ENCODE measurements at regions of chr12 and their contacts with region 1.

Region 1: DNA sequence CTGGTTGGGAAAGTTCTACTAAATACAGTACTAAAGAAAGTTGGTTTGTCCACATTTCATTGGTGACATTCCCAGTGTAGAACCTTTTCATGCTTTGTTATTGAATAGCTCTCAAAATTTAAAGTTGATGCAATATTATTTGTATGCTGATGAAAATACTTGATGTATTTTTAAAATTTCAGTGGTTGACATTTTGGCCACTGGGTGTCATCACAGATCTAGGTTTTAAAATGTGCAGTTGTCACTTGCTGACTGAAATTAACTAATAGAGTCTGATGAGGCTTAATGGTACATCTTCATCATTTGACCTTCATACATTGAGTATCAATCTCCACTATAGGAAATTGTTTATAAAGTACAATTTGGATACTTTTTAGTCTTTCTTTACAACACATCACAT is 37.1 kb downstream of the CMAS start:
- DNase-seq: peak; percentile 56
- H3K4me3 ChIP-seq: no peak overlapping the region
- H3K27ac ChIP-seq: no peak overlapping the region
- H3K4me1 ChIP-seq: no peaks in the 10 kb centered on the region
- H3K27me3 ChIP-seq: peaks cover 0 to 2% of the 10 kb centered on the region in 2 experiments
- CTCF ChIP-seq: peak in 1 of 2 donors; percentile 12
- POLR2A ChIP-seq: no peak

Region 2: GRCh38 chr12:22069856-22070565 is 13.2 kb before region 1 on chr12:
- CTCF ChIA-PET with region 1: interaction called, 12 read pairs
- POLR2A ChIA-PET with region 1: no interaction called
- dilution Hi-C with region 1: no loop called
- intact Hi-C with region 1: no loop called
- DNase-seq: no peak
- H3K4me3 ChIP-seq: no peak overlapping the region
- H3K27ac ChIP-seq: no peak overlapping the region
- H3K4me1 ChIP-seq: no peaks in the 10 kb centered on the region
- H3K27me3 ChIP-seq: peaks cover 0 to 2% of the 10 kb centered on the region in 2 experiments
- CTCF ChIP-seq: no peak
- POLR2A ChIP-seq: no peak

Region 3: GRCh38 chr12:22437031-22437780 is 354.0 kb after region 1 on chr12:
- CTCF ChIA-PET with region 1: interaction called, 13 read pairs
- POLR2A ChIA-PET with region 1: no interaction called
- dilution Hi-C with region 1: no loop called
- intact Hi-C with region 1: loop called (anchors 1 kb)
- DNase-seq: no peak
- H3K4me3 ChIP-seq: no peak overlapping the region
- H3K27ac ChIP-seq: no peak overlapping the region
- H3K4me1 ChIP-seq: no peaks in the 10 kb centered on the region
- H3K27me3 ChIP-seq: peaks cover 0 to 5% of the 10 kb centered on the region in 2 experiments
- CTCF ChIP-seq: no peak
- POLR2A ChIP-seq: no peak

Region 4: GRCh38 chr12:22443379-22444316 is 360.5 kb after region 1 on chr12:
- CTCF ChIA-PET with region 1: interaction called, 63 read pairs
- POLR2A ChIA-PET with region 1: no interaction called
- dilution Hi-C with region 1: no loop called
- intact Hi-C with region 1: loop called (anchors 1 kb)
- DNase-seq: peak; percentile 67
- H3K4me3 ChIP-seq: no peak overlapping the region
- H3K27ac ChIP-seq: no peak overlapping the region
- H3K4me1 ChIP-seq: no peaks in the 10 kb centered on the region
- H3K27me3 ChIP-seq: peaks cover 0 to 4% of the 10 kb centered on the region in 2 experiments
- CTCF ChIP-seq: peak; percentile 58 to 67
- POLR2A ChIP-seq: no peak

Measured in endothelial cell of umbilical vein (primary cell).